Activated CD4-positive, alpha-beta memory T cell treated with anti-CD3 and anti-CD28 coated beads for 36 hours (primary cell): ENCODE measurements at regions of chr13 and their contacts with region 1.

Region 1: GRCh38 chr13:51911860-51912510 is 50.2 kb downstream of the CCDC70 start:
- DNase-seq: no peak
- H3K4me3 Mint-ChIP-seq: no peak overlapping the region
- H3K27ac Mint-ChIP-seq: no peak overlapping the region
- H3K4me1 Mint-ChIP-seq: peaks cover 30% of the 10 kb centered on the region
- H3K27me3 Mint-ChIP-seq: peaks cover 14% of the 10 kb centered on the region

Region 2: GRCh38 chr13:51674279-51674678 is 237.7 kb before region 1 on chr13:
- CTCF ChIA-PET with region 1: no interaction called
- POLR2A ChIA-PET with region 1: no interaction called
- intact Hi-C with region 1: no loop called
- DNase-seq: no peak
- H3K4me3 Mint-ChIP-seq: no peak overlapping the region
- H3K27ac Mint-ChIP-seq: no peak overlapping the region
- H3K4me1 Mint-ChIP-seq: peaks cover 4% of the 10 kb centered on the region
- H3K27me3 Mint-ChIP-seq: no peaks in the 10 kb centered on the region

Region 3: GRCh38 chr13:51825165-51825592 is 86.8 kb before region 1 on chr13:
- CTCF ChIA-PET with region 1: no interaction called
- POLR2A ChIA-PET with region 1: no interaction called
- intact Hi-C with region 1: loop called (anchors 2 kb)
- DNase-seq: no peak
- H3K4me3 Mint-ChIP-seq: peak overlapping the region; percentile 52
- H3K27ac Mint-ChIP-seq: peak overlapping the region; percentile 84
- H3K4me1 Mint-ChIP-seq: peaks cover 81% of the 10 kb centered on the region
- H3K27me3 Mint-ChIP-seq: no peaks in the 10 kb centered on the region